ENCODE measurements at regions of chr7 and their contacts with region 1.

Region 1: GRCh38 chr7:66740302-66740979 is at the start of gene RABGEF1:
- DNase-seq: peak; percentile 83 to 99
- H3K4me3 ChIP-seq: peak within 1 kb of the TSS; percentile 76 to 86
- H3K27ac ChIP-seq: peak within 1 kb of the TSS; percentile 94 to 100
- H3K4me1 ChIP-seq: peaks cover 0 to 15% of the 10 kb centered on the region in 2 donors
- H3K27me3 ChIP-seq: no peaks in the 10 kb centered on the region
- CTCF ChIP-seq: peak in 1 of 3 experiments; percentile 21
- total RNA-seq, gene RABGEF1: 31.6 TPM

Region 2: GRCh38 chr7:65750511-65751344 is 989.7 kb before region 1 on chr7:
- intact Hi-C with region 1: loop called (anchors 5 kb)
- DNase-seq: peak; percentile 57 to 94
- H3K4me3 ChIP-seq: peak overlapping the region; percentile 87 to 98
- H3K27ac ChIP-seq: peak overlapping the region; percentile 87 to 93
- H3K4me1 ChIP-seq: peaks cover 0 to 11% of the 10 kb centered on the region in 2 donors
- H3K27me3 ChIP-seq: no peaks in the 10 kb centered on the region
- CTCF ChIP-seq: peak in 2 of 3 experiments; percentile 13 to 34

Region 3: GRCh38 chr7:66493235-66494181 is 246.9 kb before region 1 on chr7:
- intact Hi-C with region 1: loop called (anchors 2 kb)
- DNase-seq: peak; percentile 89 to 99
- H3K4me3 ChIP-seq: peak overlapping the region; percentile 61 to 76
- H3K27ac ChIP-seq: peak overlapping the region; percentile 89 to 94
- H3K4me1 ChIP-seq: peaks cover 0 to 6% of the 10 kb centered on the region in 2 donors
- H3K27me3 ChIP-seq: no peaks in the 10 kb centered on the region
- CTCF ChIP-seq: peak; percentile 29 to 54 (median 38)

Region 4: DNA sequence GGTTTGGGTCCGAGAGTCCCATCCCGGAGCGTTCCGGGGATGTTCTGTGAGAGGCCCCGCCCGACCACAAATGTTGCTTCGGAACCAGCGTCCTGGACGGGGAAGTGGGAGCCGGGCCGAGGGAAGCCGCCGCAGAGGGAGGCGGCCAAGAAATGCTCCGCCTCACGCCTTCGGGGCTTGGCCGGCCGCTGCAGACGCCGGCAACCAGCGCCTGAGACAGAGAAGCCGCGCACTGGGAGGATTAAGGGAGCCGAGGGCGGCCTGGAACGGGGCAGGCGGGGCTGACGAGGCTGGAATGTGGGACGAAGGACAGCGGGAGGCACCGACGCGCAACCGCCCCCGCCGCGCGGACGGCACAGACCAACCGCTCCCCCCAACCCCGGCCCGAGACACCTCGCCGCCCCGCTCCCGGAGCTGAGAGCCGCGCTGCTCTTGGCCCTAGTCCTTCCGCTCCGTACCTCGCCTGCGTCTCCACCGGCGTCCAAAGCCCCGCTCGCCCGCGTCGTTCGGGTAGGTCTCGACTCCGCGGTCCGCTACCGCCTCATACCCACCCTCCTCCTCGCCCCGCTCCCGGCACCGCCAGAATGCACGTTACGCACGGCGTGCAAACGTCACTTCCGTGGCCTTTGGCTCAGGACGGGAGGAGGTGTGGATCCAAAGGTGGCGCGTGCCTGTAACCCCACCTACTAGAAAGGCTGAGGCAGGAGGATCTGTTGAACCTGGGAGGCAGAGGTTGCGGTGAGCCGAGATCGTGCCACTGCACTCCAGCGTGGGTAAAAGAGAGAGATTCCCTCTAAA is 148.4 kb before region 1 on chr7:
- intact Hi-C with region 1: loop called (anchors 1 kb)
- DNase-seq: peak; percentile 67 to 95
- H3K4me3 ChIP-seq: peak overlapping the region; percentile 76 to 95
- H3K27ac ChIP-seq: peak overlapping the region; percentile 94 to 99
- H3K4me1 ChIP-seq: peaks cover 0 to 15% of the 10 kb centered on the region in 2 donors
- H3K27me3 ChIP-seq: no peaks in the 10 kb centered on the region
- CTCF ChIP-seq: no peak

Region 5: GRCh38 chr7:66654123-66654732 is 86.2 kb before region 1 on chr7:
- intact Hi-C with region 1: loop called (anchors 1 kb)
- DNase-seq: peak; percentile 92 to 99
- H3K4me3 ChIP-seq: peak overlapping the region; percentile 87 to 97
- H3K27ac ChIP-seq: peak overlapping the region; percentile 98 to 99
- H3K4me1 ChIP-seq: peaks cover 0 to 13% of the 10 kb centered on the region in 2 donors
- H3K27me3 ChIP-seq: no peaks in the 10 kb centered on the region
- CTCF ChIP-seq: peak in 2 of 3 experiments; percentile 14 to 30

Region 6: GRCh38 chr7:66681491-66682349 is 58.7 kb before region 1 on chr7:
- intact Hi-C with region 1: loop called (anchors 1 kb)
- DNase-seq: peak; percentile 88 to 99
- H3K4me3 ChIP-seq: peak overlapping the region; percentile 68 to 87
- H3K27ac ChIP-seq: peak overlapping the region; percentile 99 to 100
- H3K4me1 ChIP-seq: peaks cover 4 to 11% of the 10 kb centered on the region in 2 donors
- H3K27me3 ChIP-seq: no peaks in the 10 kb centered on the region
- CTCF ChIP-seq: no peak

Region 7: DNA sequence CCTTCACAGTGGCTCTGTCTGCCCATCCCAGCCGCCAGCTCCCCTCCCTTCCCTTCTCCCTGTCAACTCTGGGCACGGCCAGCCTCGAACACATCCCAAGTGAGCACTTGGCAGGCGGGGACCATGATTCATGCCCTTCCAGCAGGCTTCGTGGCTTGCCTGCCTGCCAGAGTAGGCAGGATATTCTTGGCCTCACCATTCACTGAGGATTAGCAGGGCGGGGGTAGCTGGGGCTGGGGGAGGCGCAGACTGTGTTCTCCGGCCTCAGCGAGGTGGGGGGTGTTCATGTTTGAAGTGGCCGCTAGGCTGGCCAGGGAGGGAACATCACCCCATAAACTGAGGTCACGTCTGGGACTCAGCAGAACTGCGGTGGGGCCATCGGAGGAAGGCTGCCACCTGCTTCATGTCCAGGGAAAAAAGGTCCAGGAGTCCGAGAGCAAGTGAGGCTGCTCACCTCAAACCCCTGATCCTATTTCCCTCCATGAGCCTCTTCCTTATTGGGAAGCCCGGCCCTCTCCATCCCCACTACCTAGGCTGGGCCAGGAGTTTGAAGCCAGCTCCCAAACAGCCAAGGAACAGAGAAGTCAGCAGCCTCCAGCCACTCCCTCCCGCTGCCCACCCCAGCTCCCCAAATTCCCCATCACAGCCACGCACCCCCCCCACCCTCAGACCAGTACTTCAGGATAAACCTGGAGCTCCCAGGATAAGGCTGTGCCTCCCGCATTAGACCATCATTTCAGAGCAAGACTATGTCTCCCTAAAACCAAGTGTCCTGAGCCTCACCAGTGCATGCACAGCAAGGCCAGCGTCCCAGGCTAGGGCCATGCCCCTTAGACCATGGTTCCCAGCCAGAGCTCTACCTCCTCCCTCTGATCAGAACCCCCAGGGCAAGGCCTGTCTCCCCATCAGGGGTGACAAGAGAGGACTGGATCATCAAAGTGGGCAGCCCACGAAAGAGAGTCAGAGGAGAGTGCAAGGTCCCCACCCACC is 42.7 kb before region 1 on chr7:
- intact Hi-C with region 1: loop called (anchors 5 kb)
- DNase-seq: peak in 1 of 2 donors; percentile 83
- H3K4me3 ChIP-seq: peak overlapping the region in 1 of 2 donors; percentile 11
- H3K27ac ChIP-seq: peak overlapping the region; percentile 76 to 77
- H3K4me1 ChIP-seq: peaks cover 6 to 17% of the 10 kb centered on the region in 2 donors
- H3K27me3 ChIP-seq: no peaks in the 10 kb centered on the region
- CTCF ChIP-seq: no peak